Activated B cell treated with CpG ODN at 0.5 μM for 24 hours (primary cell): ENCODE measurements at regions of chr13 and their contacts with region 1.

Region 1: GRCh38 chr13:44917589-44918325 is 71.5 kb downstream of the NUFIP1 start:
- DNase-seq: peak; percentile 96
- ATAC-seq: peak; percentile 77
- H3K4me3 Mint-ChIP-seq: no peak overlapping the region
- H3K27ac Mint-ChIP-seq: no peak overlapping the region
- H3K4me1 Mint-ChIP-seq: peaks cover 2% of the 10 kb centered on the region
- H3K27me3 Mint-ChIP-seq: no peaks in the 10 kb centered on the region
- CTCF ChIP-seq: no peak

Region 2: DNA sequence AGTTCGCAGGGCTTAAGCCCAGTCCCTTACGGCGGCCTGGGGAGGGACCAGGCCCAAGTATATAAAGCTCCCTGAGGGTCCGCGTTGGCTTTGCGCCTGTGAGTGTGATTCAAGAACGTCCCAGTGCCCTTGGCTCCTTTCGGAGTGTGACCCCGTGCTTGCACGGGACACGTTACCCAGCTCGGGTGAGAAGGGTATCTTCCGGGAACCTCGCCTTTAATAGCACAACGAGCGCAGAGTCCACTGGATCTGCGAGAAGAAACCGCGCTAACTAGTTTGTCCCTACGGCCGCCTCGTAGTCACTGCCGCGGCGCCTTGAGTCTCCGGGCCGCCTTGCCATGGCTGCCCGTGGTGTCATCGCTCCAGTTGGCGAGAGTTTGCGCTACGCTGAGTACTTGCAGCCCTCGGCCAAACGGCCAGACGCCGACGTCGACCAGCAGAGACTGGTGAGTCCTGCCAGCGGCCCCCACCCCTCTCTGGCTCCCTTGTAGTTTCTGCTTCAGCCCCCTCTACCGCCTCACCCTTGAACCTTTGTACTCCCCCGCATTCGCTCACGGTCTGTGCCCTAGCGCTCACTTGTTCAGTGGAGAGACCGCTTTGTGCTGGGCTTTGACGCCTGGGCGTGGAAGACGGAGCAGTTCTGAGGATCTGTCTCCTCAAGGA is 1894.3 kb before region 1 on chr13 and contains the start of gene DNAJC15:
- CTCF ChIA-PET with region 1: no interaction called
- POLR2A ChIA-PET with region 1: no interaction called
- intact Hi-C with region 1: loop called (anchors 5 kb)
- DNase-seq: peak; percentile 81
- ATAC-seq: peak; percentile 85
- H3K4me3 Mint-ChIP-seq: peak within 1 kb of the TSS; percentile 94
- H3K27ac Mint-ChIP-seq: peak within 1 kb of the TSS; percentile 97
- H3K4me1 Mint-ChIP-seq: peaks cover 47% of the 10 kb centered on the region
- H3K27me3 Mint-ChIP-seq: no peaks in the 10 kb centered on the region
- CTCF ChIP-seq: no peak
- total RNA-seq, gene DNAJC15: 19.1 and 19.3 TPM in 2 replicates

Region 3: GRCh38 chr13:44141725-44142539 is 775.8 kb before region 1 on chr13:
- CTCF ChIA-PET with region 1: no interaction called
- POLR2A ChIA-PET with region 1: no interaction called
- intact Hi-C with region 1: loop called (anchors 1 kb)
- DNase-seq: peak; percentile 100
- ATAC-seq: peak; percentile 99
- H3K4me3 Mint-ChIP-seq: peak overlapping the region; percentile 93
- H3K27ac Mint-ChIP-seq: peak overlapping the region; percentile 86
- H3K4me1 Mint-ChIP-seq: peaks cover 29% of the 10 kb centered on the region
- H3K27me3 Mint-ChIP-seq: peaks cover 8% of the 10 kb centered on the region
- CTCF ChIP-seq: no peak

Region 4: DNA sequence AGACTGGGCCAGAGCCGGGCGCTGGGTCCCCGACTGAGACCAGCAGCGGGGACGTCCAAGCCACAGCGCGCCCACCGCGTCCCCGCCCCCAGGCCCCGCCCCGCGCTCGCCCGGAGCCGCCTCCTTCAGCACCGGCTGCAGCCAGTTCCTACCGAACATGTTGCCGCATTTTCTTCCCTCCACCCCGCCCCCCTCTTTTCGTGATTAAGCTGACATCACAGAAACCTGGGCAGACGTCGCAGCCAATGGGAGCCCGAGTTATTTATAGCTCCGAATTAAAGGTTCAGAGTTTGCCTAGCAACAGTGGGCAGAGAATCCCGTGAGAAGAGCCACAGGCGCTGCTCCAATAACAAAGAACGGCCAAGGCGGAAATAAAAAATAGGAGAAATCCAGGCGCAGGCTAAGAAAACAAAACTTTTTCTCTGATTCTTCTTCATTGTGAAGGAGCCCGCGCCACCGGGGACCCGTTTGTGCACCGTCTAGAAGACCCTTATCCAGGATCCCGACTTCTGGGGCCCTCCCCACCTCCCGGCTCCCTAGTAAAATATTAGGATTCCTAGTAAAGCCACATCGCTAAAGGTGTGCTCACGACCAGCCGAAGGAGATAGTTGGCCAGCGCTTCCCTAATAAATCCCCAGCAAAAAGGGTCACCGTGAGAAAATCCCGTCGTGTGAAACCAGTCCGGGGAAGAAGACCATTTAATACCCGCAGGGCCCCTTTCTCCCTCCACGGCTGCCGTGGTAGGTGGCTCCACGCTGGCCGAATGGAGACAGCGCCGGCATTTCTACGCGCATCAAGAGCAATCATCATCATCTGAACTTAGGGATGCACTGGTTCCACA is 482.4 kb before region 1 on chr13:
- CTCF ChIA-PET with region 1: no interaction called
- POLR2A ChIA-PET with region 1: no interaction called
- intact Hi-C with region 1: loop called (anchors 1 kb)
- DNase-seq: peak; percentile 78
- ATAC-seq: peak; percentile 90
- H3K4me3 Mint-ChIP-seq: peak overlapping the region; percentile 85
- H3K27ac Mint-ChIP-seq: peak overlapping the region; percentile 69
- H3K4me1 Mint-ChIP-seq: peaks cover 28% of the 10 kb centered on the region
- H3K27me3 Mint-ChIP-seq: peaks cover 8% of the 10 kb centered on the region
- CTCF ChIP-seq: no peak

Region 5: DNA sequence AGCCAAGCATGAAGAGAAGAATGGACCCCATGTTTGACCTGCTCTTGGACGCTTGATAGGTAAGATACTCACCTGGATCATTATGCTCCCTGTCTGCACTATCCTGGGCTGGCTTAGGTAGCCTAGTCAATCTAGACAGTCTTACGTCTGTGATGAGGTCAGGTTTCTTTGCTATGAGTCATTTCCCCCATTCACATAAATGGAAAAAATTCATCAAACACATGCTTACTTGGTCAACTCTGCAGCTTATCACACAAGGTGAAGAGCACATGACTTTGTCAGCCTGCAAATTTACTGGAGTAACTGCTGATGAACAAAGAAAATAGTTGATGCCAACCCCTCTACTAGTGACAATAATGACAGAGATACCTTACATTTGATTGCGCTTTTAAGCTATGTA is 98.5 kb before region 1 on chr13:
- CTCF ChIA-PET with region 1: no interaction called
- POLR2A ChIA-PET with region 1: no interaction called
- intact Hi-C with region 1: no loop called
- DNase-seq: no peak
- ATAC-seq: peak; percentile 28
- H3K4me3 Mint-ChIP-seq: no peak overlapping the region
- H3K27ac Mint-ChIP-seq: no peak overlapping the region
- H3K4me1 Mint-ChIP-seq: no peaks in the 10 kb centered on the region
- H3K27me3 Mint-ChIP-seq: peaks cover 2% of the 10 kb centered on the region
- CTCF ChIP-seq: no peak

Region 6: DNA sequence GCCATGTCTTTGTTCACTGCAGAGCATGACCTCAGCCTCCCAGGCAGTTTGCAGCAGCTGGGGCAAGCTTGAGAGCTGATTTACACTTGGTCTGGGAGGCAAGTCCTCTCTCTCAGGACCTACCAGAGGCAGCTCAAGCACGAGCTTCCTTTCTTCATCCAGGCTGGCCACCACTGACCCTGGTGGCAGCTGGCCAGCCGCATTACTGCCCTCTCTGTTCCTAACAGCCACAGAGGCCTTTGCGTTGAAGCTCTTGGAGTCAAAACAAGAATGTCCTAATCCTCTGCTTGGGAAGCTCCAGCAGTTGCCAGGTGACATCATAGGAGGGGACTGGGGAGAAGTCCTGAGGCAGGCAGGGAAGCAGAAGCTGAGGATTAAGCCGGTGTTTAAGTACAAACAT is 14.2 kb before region 1 on chr13:
- CTCF ChIA-PET with region 1: no interaction called
- POLR2A ChIA-PET with region 1: no interaction called
- intact Hi-C with region 1: no loop called
- DNase-seq: no peak
- ATAC-seq: no peak
- H3K4me3 Mint-ChIP-seq: no peak overlapping the region
- H3K27ac Mint-ChIP-seq: no peak overlapping the region
- H3K4me1 Mint-ChIP-seq: no peaks in the 10 kb centered on the region
- H3K27me3 Mint-ChIP-seq: peaks cover 18% of the 10 kb centered on the region
- CTCF ChIP-seq: no peak

Region 7: DNA sequence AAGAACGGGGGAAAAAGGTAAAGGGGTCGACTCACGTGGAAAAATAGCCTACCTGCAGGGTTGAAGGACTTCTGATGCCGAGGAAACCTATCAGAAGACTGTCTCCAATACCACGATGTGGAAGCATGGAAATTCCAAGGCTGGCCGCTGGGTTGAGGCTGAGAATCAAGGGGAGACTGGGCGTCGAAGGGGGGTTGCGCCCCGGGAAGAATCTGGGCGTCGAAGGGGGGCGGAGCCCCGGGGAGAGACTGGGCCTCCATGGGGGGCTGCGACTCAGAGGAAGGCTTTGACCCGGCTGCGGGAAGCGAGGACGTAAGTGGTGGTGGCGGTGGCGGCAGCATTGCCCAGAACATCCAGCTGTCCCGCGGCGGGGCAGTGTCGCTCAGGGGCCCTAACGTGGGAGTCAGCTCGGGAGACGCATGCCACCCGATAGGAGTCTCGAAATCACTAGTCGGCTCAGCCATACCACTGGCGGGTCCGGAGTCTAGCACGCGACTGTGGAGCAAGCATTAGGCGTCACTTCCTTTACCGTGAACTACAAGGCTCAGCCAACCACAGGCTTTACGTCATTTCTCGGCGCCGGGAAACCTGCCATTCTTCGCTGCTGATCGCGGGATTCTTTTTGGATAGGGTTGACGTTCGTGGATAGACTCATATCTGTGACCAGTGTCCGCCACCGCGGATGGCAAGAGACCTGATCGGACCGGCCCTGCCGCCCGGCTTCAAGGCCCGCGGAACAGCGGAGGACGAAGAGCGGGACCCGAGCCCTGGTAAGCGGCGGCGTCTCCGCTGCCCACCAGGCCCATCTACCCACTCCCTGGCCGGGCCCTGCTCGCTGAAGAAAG is 71.4 kb after region 1 on chr13 and contains the starts of genes GPALPP1 and NUFIP1:
- CTCF ChIA-PET with region 1: no interaction called
- POLR2A ChIA-PET with region 1: interaction called, 3 read pairs
- intact Hi-C with region 1: loop called (anchors 1 kb)
- DNase-seq: peak; percentile 80
- ATAC-seq: peak; percentile 97
- H3K4me3 Mint-ChIP-seq: peak within 1 kb of the TSS; percentile 99
- H3K27ac Mint-ChIP-seq: peak within 1 kb of the TSS; percentile 98
- H3K4me1 Mint-ChIP-seq: peaks cover 37% of the 10 kb centered on the region
- H3K27me3 Mint-ChIP-seq: no peaks in the 10 kb centered on the region
- CTCF ChIP-seq: no peak
- total RNA-seq, gene GPALPP1: 28.8 and 35.8 TPM in 2 replicates
- total RNA-seq, gene NUFIP1: 6.6 and 7.8 TPM in 2 replicates

Region 8: DNA sequence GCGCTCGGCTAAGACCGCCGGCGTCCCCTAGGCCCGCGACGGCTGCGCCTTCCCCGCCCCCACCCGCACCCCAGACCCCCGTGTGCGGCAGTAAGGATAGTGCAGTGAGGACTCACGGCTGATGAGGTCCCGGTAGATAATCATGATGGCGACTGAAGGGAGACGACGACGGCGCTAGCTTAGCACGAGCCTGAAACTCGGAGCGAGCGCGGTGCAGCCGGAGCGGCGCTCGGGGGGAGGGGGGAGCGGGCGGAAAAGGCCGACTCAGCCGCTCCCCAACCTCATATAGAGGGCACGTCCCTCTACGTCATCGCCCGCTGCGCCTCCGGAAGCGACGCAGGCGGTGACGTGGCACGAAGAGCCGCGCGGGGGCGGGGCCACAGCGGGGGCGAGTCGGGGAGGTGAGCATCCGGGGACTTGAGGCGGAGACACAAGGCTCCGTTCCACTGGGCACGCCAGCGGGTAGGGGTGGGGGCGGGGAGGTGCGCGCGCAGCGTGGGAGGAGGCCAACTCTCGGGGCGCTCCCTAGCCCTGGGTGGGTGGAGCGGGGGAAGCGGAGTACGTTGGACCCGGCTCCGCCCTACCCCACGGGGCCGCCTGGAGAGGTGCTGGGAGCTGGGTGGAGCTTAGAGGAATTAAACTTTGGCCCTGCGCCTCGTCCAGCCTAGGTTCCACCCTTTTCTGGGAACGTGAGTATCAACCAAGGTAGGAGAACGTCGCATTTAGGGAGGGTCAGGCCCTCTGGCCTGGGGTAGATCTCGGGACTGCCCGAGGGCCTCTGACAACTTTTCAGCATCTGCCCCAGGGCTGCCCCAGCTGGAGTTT is 423.4 kb after region 1 on chr13 and contains the start of gene TPT1:
- CTCF ChIA-PET with region 1: no interaction called
- POLR2A ChIA-PET with region 1: no interaction called
- intact Hi-C with region 1: loop called (anchors 1 kb)
- DNase-seq: peak; percentile 99
- ATAC-seq: peak; percentile 89
- H3K4me3 Mint-ChIP-seq: peak within 1 kb of the TSS; percentile 99
- H3K27ac Mint-ChIP-seq: peak within 1 kb of the TSS; percentile 99
- H3K4me1 Mint-ChIP-seq: peaks cover 56% of the 10 kb centered on the region
- H3K27me3 Mint-ChIP-seq: no peaks in the 10 kb centered on the region
- CTCF ChIP-seq: no peak
- total RNA-seq, gene TPT1: 3,880 and 4,323 TPM in 2 replicates